ENCODE measurements at regions of chr1 and their contacts with region 1.

Region 1: GRCh38 chr1:108512239-108512981 is 47.5 kb upstream of the EEIG2 start:
- DNase-seq: peak in 2 of 5 donors; percentile 42 to 64
- H3K4me3 ChIP-seq: no peak overlapping the region
- H3K27ac ChIP-seq: no peak overlapping the region
- H3K4me1 ChIP-seq: no peaks in the 10 kb centered on the region
- H3K27me3 ChIP-seq: no peaks in the 10 kb centered on the region
- CTCF ChIP-seq: peak; percentile 79

Region 2: DNA sequence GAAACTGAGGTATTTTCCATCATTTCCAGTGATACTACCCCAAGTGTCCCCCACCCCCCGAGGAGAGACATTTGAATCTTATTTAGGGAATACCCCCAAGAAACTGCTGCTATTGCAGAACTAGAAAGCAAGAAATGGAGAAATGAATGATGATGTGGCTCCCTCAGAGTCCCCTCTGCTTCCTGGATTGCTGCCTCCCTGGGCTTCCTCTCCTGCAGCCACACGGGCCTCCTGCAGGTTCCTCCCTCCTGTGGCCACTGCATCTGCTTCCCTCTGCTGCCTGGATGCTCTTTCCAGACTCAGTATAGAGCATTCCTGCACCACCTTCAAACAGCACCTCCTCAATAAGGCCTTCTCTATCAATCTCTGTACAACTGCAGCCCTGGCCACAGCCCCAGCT is 381.6 kb before region 1 on chr1:
- intact Hi-C with region 1: no loop called
- DNase-seq: no peak
- H3K4me3 ChIP-seq: no peak overlapping the region
- H3K27ac ChIP-seq: no peak overlapping the region
- H3K4me1 ChIP-seq: no peaks in the 10 kb centered on the region
- H3K27me3 ChIP-seq: no peaks in the 10 kb centered on the region
- CTCF ChIP-seq: no peak

Region 3: GRCh38 chr1:108141621-108142020 is 370.8 kb before region 1 on chr1:
- intact Hi-C with region 1: no loop called
- DNase-seq: no peak
- H3K4me3 ChIP-seq: no peak overlapping the region
- H3K27ac ChIP-seq: no peak overlapping the region
- H3K4me1 ChIP-seq: no peaks in the 10 kb centered on the region
- H3K27me3 ChIP-seq: no peaks in the 10 kb centered on the region
- CTCF ChIP-seq: no peak

Region 4: GRCh38 chr1:108643492-108644335 is 131.3 kb after region 1 on chr1:
- intact Hi-C with region 1: loop called (anchors 10 kb)
- DNase-seq: peak in 3 of 5 donors; percentile 36 to 79 (median 69)
- H3K4me3 ChIP-seq: no peak overlapping the region
- H3K27ac ChIP-seq: no peak overlapping the region
- H3K4me1 ChIP-seq: peaks cover 0 to 2% (median 0%) of the 10 kb centered on the region in 3 donors
- H3K27me3 ChIP-seq: no peaks in the 10 kb centered on the region
- CTCF ChIP-seq: peak; percentile 49

Region 5: DNA sequence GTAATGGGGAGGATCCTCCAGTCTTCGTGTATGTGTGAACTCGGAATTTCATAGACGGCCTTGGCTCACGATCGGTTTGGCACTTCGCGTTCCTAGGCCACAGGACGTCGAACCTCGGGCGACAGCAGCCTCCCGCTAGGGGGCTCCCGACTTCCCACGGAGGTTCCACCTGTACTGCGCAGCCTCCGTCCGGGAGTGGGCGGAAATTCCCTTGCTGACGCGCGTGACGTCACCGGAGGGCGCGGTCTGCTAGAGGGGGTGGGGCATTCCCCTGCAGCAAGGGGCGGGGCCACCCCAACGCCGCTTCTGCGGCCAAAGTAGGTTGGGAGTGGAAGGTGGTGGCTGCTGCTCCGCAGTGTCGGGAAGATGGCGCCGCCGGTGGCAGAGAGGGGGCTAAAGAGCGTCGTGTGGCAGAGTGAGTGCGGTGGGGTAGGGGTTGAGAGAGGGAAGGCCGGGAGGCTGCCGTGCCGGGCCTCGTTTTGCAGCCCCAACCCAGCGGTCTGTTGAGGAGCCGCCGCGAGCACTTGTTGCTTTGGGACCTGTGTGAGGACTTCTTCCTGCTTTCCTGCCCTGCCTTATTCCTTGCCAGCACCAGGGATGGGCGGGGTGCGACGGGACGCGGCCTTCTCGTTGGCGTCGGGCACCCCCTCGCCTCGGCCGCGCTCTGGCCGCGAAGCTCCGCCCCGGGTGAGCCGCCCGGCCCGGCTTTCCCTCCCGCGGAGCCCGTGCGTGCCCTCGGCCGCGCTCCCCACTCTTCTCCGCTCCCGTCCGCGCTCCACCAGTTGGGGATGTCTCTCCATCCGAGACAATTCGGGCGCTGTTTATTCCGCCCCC is 234.2 kb after region 1 on chr1 and contains the start of gene STXBP3:
- intact Hi-C with region 1: no loop called
- DNase-seq: peak; percentile 98 to 100 (median 99)
- H3K4me3 ChIP-seq: peak within 1 kb of the TSS; percentile 74 to 96 (median 94)
- H3K27ac ChIP-seq: peak within 1 kb of the TSS; percentile 81 to 98
- H3K4me1 ChIP-seq: peaks cover 4 to 15% (median 5%) of the 10 kb centered on the region in 3 donors
- H3K27me3 ChIP-seq: no peaks in the 10 kb centered on the region
- CTCF ChIP-seq: peak; percentile 89
- total RNA-seq, gene STXBP3: 61.4 TPM

Region 6: DNA sequence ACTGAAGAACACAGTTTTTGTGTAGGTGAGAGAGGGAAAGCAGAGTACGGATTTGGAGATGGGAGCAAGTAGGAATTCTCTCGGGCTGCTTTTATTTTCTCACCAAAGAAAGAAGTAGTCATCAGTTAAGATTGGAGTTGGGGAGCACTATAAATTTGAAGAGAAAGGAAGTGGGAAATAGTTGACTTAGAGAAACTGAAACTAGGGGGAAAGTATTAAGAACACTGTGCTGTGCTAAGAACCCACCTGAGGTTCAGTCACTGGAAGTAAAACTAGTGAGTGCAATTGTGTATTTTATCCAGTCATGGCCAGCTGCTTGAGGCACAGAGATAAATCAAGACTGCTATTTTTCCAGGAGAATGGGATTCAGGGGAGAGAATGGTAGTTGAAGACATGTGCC is 413.5 kb after region 1 on chr1:
- intact Hi-C with region 1: no loop called
- DNase-seq: no peak
- H3K4me3 ChIP-seq: no peak overlapping the region
- H3K27ac ChIP-seq: no peak overlapping the region
- H3K4me1 ChIP-seq: no peaks in the 10 kb centered on the region
- H3K27me3 ChIP-seq: no peaks in the 10 kb centered on the region
- CTCF ChIP-seq: no peak

Measured in kidney (tissue), 22 donors.